ENCODE measurements at regions of chr16 and their contacts with region 1.

Region 1: DNA sequence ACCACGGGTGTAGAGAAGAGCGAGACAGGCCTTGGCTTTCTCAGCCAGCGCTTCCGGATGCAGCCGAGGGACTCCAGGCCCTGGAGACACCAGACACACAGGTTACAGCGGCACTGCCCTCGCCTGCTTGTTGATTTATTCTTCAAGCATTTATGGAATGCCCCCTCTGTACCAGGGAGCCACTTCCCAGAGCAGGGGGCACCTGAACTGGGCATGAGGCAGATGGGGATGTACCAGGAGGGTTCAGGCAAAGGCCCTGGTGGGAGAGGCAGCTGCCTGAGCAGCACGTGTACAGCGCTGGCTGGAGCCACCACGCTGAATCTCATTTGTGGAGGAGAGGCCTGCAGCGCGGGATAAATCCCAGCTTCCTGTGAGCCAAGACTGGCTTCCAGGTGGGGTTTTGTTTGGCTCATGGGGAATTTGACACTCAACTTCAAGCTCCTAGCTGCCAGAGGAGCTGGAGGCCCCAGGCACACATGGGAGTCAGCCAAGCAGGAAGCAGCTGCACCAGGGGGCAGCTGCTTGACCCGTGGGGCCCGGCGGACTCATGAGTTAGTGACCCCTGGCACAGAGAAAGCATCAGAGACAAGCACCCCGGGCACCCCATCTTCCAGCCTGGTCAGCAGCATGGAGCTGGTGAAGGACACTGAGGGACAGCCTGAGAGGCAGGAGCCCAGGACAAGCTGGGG is 59.7 kb downstream of the IL21R start:
- DNase-seq: peak in 1 of 2 experiments; percentile 68
- H3K4me3 ChIP-seq: no peak overlapping the region
- H3K27ac ChIP-seq: no peak overlapping the region
- H3K4me1 ChIP-seq: no peaks in the 10 kb centered on the region
- H3K27me3 ChIP-seq: no peaks in the 10 kb centered on the region
- CTCF ChIP-seq: no peak

Region 2: GRCh38 chr16:27154705-27155521 is 306.7 kb before region 1 on chr16:
- CTCF ChIA-PET with region 1: no interaction called
- POLR2A ChIA-PET with region 1: no interaction called
- intact Hi-C with region 1: loop called (anchors 1 kb)
- DNase-seq: peak in 1 of 2 experiments; percentile 47
- H3K4me3 ChIP-seq: no peak overlapping the region
- H3K27ac ChIP-seq: no peak overlapping the region
- H3K4me1 ChIP-seq: no peaks in the 10 kb centered on the region
- H3K27me3 ChIP-seq: peaks cover 19% of the 10 kb centered on the region; the same call in 1 of the 2 replicates
- CTCF ChIP-seq: peak; percentile 100

Region 3: GRCh38 chr16:27179500-27180072 is 282.0 kb before region 1 on chr16:
- CTCF ChIA-PET with region 1: interaction called, 3 read pairs
- POLR2A ChIA-PET with region 1: no interaction called
- intact Hi-C with region 1: loop called (anchors 1 kb)
- DNase-seq: peak; percentile 55 to 65
- H3K4me3 ChIP-seq: no peak overlapping the region
- H3K27ac ChIP-seq: no peak overlapping the region
- H3K4me1 ChIP-seq: 0 out of 2 replicates have a peak, but pooled peaks cover 1% of the 10 kb centered on the region
- H3K27me3 ChIP-seq: peaks cover 19% of the 10 kb centered on the region; the same call in 1 of the 2 replicates
- CTCF ChIP-seq: peak; percentile 88

Region 4: GRCh38 chr16:27520982-27521673 is 59.5 kb after region 1 on chr16:
- CTCF ChIA-PET with region 1: no interaction called
- POLR2A ChIA-PET with region 1: no interaction called
- intact Hi-C with region 1: no loop called
- DNase-seq: no peak
- H3K4me3 ChIP-seq: no peak overlapping the region
- H3K27ac ChIP-seq: no peak overlapping the region
- H3K4me1 ChIP-seq: no peaks in the 10 kb centered on the region
- H3K27me3 ChIP-seq: no peaks in the 10 kb centered on the region
- CTCF ChIP-seq: no peak

Region 5: GRCh38 chr16:28090646-28091377 is 629.2 kb after region 1 on chr16:
- CTCF ChIA-PET with region 1: no interaction called
- POLR2A ChIA-PET with region 1: no interaction called
- intact Hi-C with region 1: loop called (anchors 5 kb)
- DNase-seq: peak; percentile 66 to 75
- H3K4me3 ChIP-seq: no peak overlapping the region
- H3K27ac ChIP-seq: peak overlapping the region; percentile 76
- H3K4me1 ChIP-seq: peaks cover 33% of the 10 kb centered on the region
- H3K27me3 ChIP-seq: no peaks in the 10 kb centered on the region
- CTCF ChIP-seq: peak; percentile 53; the same call in 1 of the 2 replicates